CD4-positive, alpha-beta T cell (primary cell): ENCODE measurements at regions of chr16 and their contacts with region 1.

Region 1: DNA sequence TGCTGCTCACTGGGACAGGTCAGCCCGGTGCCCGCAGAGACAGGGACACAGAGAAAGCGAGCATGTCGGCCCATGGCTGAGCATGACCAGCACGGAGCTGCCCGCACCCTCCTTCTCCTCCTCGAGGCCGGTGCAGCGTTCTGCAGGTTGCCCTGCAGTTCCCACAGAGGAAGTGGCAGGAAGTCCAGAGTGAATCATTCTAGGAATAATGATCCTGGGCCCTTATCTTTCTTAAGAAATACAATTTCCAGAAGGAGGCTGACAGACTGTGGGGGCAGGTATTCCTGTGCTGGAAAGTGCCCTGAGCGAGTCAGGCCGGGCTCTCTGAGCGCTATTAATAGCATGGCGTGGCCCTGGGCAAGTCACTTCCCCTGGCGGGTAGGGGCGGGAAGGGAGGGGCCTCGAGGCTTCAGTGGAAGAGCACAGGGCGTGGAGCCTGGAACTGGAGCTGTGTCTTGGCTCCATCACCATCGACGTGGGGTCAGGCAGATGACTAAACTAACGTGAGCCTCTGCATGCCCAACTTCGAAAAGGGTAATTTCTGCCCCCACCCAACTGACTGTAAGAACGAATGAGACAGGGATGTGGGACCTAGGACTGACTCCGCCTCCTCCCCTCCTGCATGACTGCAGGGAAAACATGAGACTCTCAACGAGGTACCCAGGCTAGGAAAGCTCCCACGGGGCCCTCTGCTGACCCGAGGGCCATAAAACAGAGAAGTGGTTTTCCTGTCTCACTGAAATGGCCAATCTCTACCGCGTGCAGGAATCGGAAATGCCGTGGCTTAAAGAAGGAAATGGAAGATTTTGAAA is 9.8 kb downstream of the TMEM204 start:
- DNase-seq: peak in 9 of 14 experiments; percentile 24 to 76 (median 45)
- ATAC-seq: peak; percentile 66
- H3K4me3 ChIP-seq: peak overlapping the region; percentile 10
- H3K4me3 Mint-ChIP-seq: peak overlapping the region; percentile 54
- H3K27ac ChIP-seq: peak overlapping the region; percentile 56 to 58
- H3K27ac Mint-ChIP-seq: peak overlapping the region; percentile 80
- H3K4me1 ChIP-seq: peaks cover 99% of the 10 kb centered on the region
- H3K4me1 Mint-ChIP-seq: peaks cover 81% of the 10 kb centered on the region
- H3K27me3 ChIP-seq: no peaks in the 10 kb centered on the region
- H3K27me3 Mint-ChIP-seq: no peaks in the 10 kb centered on the region
- CTCF ChIP-seq: no peak

Region 2: DNA sequence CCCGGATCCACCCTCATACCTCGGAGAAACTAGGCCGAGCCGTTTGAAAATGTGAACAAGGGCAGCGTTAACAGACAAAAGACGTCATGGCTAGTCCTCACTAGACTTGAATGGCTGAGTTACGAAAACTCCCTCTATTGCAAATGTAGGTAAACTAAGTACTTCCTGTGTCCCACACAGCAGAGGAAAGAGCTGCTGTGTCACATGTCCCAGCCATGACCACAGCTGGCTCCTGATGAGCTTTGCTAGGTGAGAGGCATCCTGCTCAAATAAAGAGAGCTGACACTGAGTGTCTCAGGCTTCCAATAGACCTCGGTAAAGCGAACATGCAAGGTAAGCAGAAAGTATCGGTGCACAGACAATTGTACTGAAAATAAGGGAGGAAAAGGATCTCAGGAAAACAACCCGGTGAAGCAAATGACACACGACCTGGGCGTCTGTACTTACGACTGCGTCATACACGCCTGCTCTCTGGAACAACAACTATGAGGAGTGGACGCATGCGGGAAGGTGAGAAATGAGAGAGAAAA is 16.2 kb after region 1 on chr16:
- CTCF ChIA-PET with region 1: no interaction called
- POLR2A ChIA-PET with region 1: interaction called, 10 read pairs
- intact Hi-C with region 1: no loop called
- DNase-seq: peak in 10 of 14 experiments; percentile 22 to 78 (median 36)
- ATAC-seq: peak; percentile 90
- H3K4me3 ChIP-seq: no peak overlapping the region
- H3K4me3 Mint-ChIP-seq: peak overlapping the region; percentile 62
- H3K27ac ChIP-seq: peak overlapping the region; percentile 26 to 45
- H3K27ac Mint-ChIP-seq: peak overlapping the region; percentile 79
- H3K4me1 ChIP-seq: peaks cover 52% of the 10 kb centered on the region
- H3K4me1 Mint-ChIP-seq: peaks cover 43% of the 10 kb centered on the region
- H3K27me3 ChIP-seq: no peaks in the 10 kb centered on the region
- H3K27me3 Mint-ChIP-seq: no peaks in the 10 kb centered on the region
- CTCF ChIP-seq: no peak